Activated CD4-positive, alpha-beta memory T cell treated with anti-CD3 and anti-CD28 coated beads for 36 hours (primary cell): ENCODE measurements at regions of chr13 and their contacts with region 1.

Region 1: GRCh38 chr13:30132623-30133553 is 174.5 kb downstream of the KATNAL1 start:
- DNase-seq: peak; percentile 98
- H3K4me3 Mint-ChIP-seq: no peak overlapping the region
- H3K27ac Mint-ChIP-seq: no peak overlapping the region
- H3K4me1 Mint-ChIP-seq: peaks cover 11% of the 10 kb centered on the region
- H3K27me3 Mint-ChIP-seq: no peaks in the 10 kb centered on the region

Region 2: GRCh38 chr13:29222458-29222857 is 910.4 kb before region 1 on chr13:
- CTCF ChIA-PET with region 1: no interaction called
- POLR2A ChIA-PET with region 1: no interaction called
- intact Hi-C with region 1: no loop called
- DNase-seq: no peak
- H3K4me3 Mint-ChIP-seq: no peak overlapping the region
- H3K27ac Mint-ChIP-seq: no peak overlapping the region
- H3K4me1 Mint-ChIP-seq: no peaks in the 10 kb centered on the region
- H3K27me3 Mint-ChIP-seq: no peaks in the 10 kb centered on the region

Region 3: GRCh38 chr13:30165796-30166195 is 32.9 kb after region 1 on chr13:
- CTCF ChIA-PET with region 1: interaction called, 16 read pairs
- POLR2A ChIA-PET with region 1: no interaction called
- intact Hi-C with region 1: no loop called
- DNase-seq: no peak
- H3K4me3 Mint-ChIP-seq: no peak overlapping the region
- H3K27ac Mint-ChIP-seq: no peak overlapping the region
- H3K4me1 Mint-ChIP-seq: peaks cover 4% of the 10 kb centered on the region
- H3K27me3 Mint-ChIP-seq: no peaks in the 10 kb centered on the region

Region 4: GRCh38 chr13:30257468-30258099 is 124.7 kb after region 1 on chr13:
- CTCF ChIA-PET with region 1: interaction called, 13 read pairs
- POLR2A ChIA-PET with region 1: no interaction called
- intact Hi-C with region 1: no loop called
- DNase-seq: no peak
- H3K4me3 Mint-ChIP-seq: no peak overlapping the region
- H3K27ac Mint-ChIP-seq: no peak overlapping the region
- H3K4me1 Mint-ChIP-seq: peaks cover 25% of the 10 kb centered on the region
- H3K27me3 Mint-ChIP-seq: no peaks in the 10 kb centered on the region

Region 5: GRCh38 chr13:30334663-30335386 is 201.9 kb after region 1 on chr13:
- CTCF ChIA-PET with region 1: interaction called, 49 read pairs
- POLR2A ChIA-PET with region 1: no interaction called
- intact Hi-C with region 1: loop called (anchors 1 kb)
- DNase-seq: peak; percentile 20
- H3K4me3 Mint-ChIP-seq: no peak overlapping the region
- H3K27ac Mint-ChIP-seq: no peak overlapping the region
- H3K4me1 Mint-ChIP-seq: peaks cover 17% of the 10 kb centered on the region
- H3K27me3 Mint-ChIP-seq: no peaks in the 10 kb centered on the region

Region 6: GRCh38 chr13:30551189-30551588 is 418.3 kb after region 1 on chr13:
- CTCF ChIA-PET with region 1: interaction called, 4 read pairs
- POLR2A ChIA-PET with region 1: no interaction called
- intact Hi-C with region 1: loop called (anchors 5 kb)
- DNase-seq: no peak
- H3K4me3 Mint-ChIP-seq: no peak overlapping the region
- H3K27ac Mint-ChIP-seq: no peak overlapping the region
- H3K4me1 Mint-ChIP-seq: no peaks in the 10 kb centered on the region
- H3K27me3 Mint-ChIP-seq: no peaks in the 10 kb centered on the region

Region 7: GRCh38 chr13:30802953-30803478 is 670.1 kb after region 1 on chr13:
- CTCF ChIA-PET with region 1: interaction called, 9 read pairs
- POLR2A ChIA-PET with region 1: no interaction called
- intact Hi-C with region 1: loop called (anchors 2 kb)
- DNase-seq: peak; percentile 89
- H3K4me3 Mint-ChIP-seq: no peak overlapping the region
- H3K27ac Mint-ChIP-seq: no peak overlapping the region
- H3K4me1 Mint-ChIP-seq: peaks cover 14% of the 10 kb centered on the region
- H3K27me3 Mint-ChIP-seq: no peaks in the 10 kb centered on the region